Body of pancreas (tissue), 4 donors: ENCODE measurements at regions of chr2 and their contacts with region 1.

Region 1: DNA sequence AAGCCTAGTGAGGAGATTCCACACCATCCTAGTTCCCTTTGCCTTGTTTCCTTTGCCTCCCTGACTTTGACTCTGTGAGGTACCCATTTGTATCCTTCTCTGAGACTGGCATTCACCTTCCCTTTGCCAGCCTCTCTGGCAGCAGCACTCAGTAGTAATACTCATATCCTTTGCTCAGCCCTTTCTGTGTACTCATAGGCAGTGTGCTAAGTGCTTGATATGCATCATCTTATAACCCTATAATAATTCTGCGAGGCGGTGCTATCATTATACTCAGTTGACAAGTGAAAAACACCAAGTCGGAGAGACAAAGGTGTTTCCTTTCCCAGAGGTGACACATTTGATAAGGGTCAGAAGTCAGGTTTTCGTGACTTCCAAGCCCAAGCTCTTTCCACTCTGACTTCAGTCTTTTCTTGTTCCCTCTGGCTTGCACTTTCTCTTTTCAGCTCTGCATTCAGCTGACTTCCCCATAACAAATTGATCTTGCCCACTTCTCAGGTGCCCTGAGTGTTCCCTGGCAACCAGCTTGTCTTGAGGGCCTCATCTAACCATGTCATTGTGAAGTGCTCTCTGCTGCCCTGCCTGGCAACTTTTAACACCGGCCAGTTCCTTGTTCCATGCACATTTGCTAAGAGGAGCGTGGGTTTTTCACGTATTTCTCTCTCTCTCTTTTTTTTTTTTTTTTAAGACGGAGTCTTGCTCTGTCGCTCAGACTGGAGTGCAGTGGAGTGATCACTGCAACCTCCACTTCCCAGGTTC is 94.5 kb upstream of the UPP2 start:
- DNase-seq: peak; percentile 52 to 73 (median 60)
- ATAC-seq: peak; percentile 77
- H3K4me3 ChIP-seq: no peak overlapping the region
- H3K27ac ChIP-seq: peak overlapping the region in 3 of 4 donors; percentile 5 to 52 (median 34)
- H3K4me1 ChIP-seq: peaks cover 27% of the 10 kb centered on the region
- H3K27me3 ChIP-seq: no peaks in the 10 kb centered on the region
- CTCF ChIP-seq: peak in 5 of 7 experiments; percentile 19 to 58 (median 39)
- POLR2A ChIP-seq: no peak

Region 2: DNA sequence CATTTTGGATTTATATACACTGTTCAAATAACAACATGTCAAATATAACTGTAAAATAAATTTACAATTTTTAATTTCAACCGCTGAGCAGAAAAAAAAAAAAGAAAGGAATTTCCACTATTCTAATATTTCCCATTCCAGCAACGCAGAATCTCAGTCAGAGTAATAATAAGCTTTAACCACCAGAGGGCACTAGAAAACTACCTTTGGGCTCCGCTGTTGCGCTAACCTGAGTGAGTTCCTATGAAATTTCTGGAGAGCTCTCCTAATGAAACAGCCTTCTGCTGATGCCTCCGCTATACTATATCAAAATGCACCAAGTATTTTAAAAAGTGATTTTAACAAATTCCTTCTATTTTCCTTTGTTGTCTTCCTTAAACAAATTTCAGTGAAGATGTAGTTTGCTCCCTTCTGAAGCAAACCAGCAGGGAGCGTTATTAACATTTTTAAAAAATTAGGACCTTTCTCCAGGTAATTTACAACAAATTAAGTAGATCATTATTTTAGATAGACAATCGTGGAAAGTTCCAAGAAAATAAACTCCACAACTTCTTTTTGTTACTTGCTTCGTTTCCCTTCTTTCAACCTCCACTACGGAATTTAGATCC is 704.5 kb before region 1 on chr2:
- intact Hi-C with region 1: loop called (anchors 10 kb)
- DNase-seq: peak; percentile 16 to 37 (median 30)
- ATAC-seq: peak; percentile 88
- H3K4me3 ChIP-seq: no peak overlapping the region
- H3K27ac ChIP-seq: no peak overlapping the region
- H3K4me1 ChIP-seq: no peaks in the 10 kb centered on the region
- H3K27me3 ChIP-seq: no peaks in the 10 kb centered on the region
- CTCF ChIP-seq: peak; percentile 59 to 83 (median 69)
- POLR2A ChIP-seq: no peak

Region 3: DNA sequence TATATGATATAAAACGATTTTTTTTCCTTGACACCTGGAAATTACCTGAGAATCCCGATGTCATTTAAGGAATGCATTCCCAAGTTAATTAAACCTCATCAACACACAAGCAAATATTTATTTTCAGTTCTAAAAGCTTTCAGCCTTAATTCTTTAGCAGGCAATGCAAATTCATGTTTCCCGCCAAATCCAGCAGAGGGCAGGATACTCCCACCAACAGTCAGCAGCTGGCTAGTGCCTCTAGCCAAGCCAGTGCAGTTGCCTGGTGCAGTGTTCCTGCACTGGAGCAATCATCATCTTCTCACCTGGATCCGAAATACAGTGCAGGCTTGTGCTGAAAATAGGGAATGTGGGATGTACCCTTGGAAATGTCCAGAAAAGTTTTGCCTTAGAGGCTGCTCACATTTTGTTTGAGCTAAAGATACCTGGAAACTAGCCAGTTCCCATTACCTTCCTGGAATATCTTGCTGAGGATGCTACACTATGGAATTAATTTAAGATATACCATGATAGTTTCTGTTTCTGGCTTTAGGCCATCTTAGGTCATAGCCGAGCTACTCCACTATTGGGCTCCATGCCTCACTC is 514.9 kb before region 1 on chr2:
- intact Hi-C with region 1: loop called (anchors 10 kb)
- DNase-seq: peak; percentile 75 to 82 (median 79)
- ATAC-seq: peak; percentile 67
- H3K4me3 ChIP-seq: no peak overlapping the region
- H3K27ac ChIP-seq: no peak overlapping the region
- H3K4me1 ChIP-seq: peaks cover 29% of the 10 kb centered on the region
- H3K27me3 ChIP-seq: no peaks in the 10 kb centered on the region
- CTCF ChIP-seq: peak; percentile 62 to 82 (median 78)
- POLR2A ChIP-seq: no peak

Region 4: DNA sequence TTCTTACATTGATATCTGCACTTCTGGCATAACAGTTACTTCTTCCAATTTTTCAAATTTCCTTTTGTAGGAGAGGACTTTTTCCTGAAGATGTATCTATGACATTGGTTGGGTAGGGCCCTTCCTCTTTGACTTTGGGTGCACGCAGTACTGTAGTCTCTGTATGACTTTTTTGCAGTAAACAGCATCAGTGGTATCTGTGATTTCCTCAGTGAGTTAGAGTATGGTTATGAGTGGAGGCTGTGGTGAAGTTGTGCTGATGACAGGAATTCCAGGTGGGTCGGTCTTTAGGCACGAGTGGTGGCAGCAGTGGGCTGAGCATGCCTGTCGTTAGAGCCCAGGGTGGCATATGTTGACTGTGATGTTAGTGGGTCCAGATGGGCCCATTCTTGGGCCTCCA is 396.0 kb before region 1 on chr2:
- intact Hi-C with region 1: loop called (anchors 10 kb)
- DNase-seq: no peak
- ATAC-seq: no peak
- H3K4me3 ChIP-seq: no peak overlapping the region
- H3K27ac ChIP-seq: no peak overlapping the region
- H3K4me1 ChIP-seq: no peaks in the 10 kb centered on the region
- H3K27me3 ChIP-seq: no peaks in the 10 kb centered on the region
- CTCF ChIP-seq: no peak
- POLR2A ChIP-seq: no peak

Region 5: DNA sequence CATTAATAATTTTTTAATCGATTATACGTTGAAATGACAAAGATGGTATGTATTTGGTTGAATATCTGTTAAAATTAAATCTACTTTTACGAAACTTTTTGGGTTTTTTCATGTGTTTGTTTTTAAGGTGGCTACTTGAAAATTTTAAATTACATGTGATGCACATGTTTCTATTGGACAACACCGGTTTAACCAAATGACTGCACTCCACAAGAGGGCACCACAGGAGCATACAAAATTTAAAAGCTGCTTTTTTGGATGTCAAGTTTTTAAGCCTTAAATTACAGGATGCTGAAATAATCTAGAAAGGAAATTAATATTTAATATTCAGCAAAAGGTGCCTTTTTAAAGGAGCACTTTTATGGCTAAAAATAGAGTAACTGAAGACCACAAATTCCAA is 229.7 kb before region 1 on chr2:
- intact Hi-C with region 1: loop called (anchors 5 kb)
- DNase-seq: peak; percentile 53 to 73 (median 66)
- ATAC-seq: no peak
- H3K4me3 ChIP-seq: no peak overlapping the region
- H3K27ac ChIP-seq: no peak overlapping the region
- H3K4me1 ChIP-seq: peaks cover 14% of the 10 kb centered on the region
- H3K27me3 ChIP-seq: no peaks in the 10 kb centered on the region
- CTCF ChIP-seq: peak; percentile 19 to 82 (median 74)
- POLR2A ChIP-seq: no peak

Region 6: GRCh38 chr2:157922336-157922735 is 84.8 kb before region 1 on chr2:
- intact Hi-C with region 1: no loop called
- DNase-seq: no peak
- ATAC-seq: no peak
- H3K4me3 ChIP-seq: no peak overlapping the region
- H3K27ac ChIP-seq: no peak overlapping the region
- H3K4me1 ChIP-seq: no peaks in the 10 kb centered on the region
- H3K27me3 ChIP-seq: no peaks in the 10 kb centered on the region
- CTCF ChIP-seq: no peak
- POLR2A ChIP-seq: no peak